Endothelial cell of umbilical vein (primary cell): ENCODE measurements at regions of chr5 and their contacts with region 1.

Region 1: DNA sequence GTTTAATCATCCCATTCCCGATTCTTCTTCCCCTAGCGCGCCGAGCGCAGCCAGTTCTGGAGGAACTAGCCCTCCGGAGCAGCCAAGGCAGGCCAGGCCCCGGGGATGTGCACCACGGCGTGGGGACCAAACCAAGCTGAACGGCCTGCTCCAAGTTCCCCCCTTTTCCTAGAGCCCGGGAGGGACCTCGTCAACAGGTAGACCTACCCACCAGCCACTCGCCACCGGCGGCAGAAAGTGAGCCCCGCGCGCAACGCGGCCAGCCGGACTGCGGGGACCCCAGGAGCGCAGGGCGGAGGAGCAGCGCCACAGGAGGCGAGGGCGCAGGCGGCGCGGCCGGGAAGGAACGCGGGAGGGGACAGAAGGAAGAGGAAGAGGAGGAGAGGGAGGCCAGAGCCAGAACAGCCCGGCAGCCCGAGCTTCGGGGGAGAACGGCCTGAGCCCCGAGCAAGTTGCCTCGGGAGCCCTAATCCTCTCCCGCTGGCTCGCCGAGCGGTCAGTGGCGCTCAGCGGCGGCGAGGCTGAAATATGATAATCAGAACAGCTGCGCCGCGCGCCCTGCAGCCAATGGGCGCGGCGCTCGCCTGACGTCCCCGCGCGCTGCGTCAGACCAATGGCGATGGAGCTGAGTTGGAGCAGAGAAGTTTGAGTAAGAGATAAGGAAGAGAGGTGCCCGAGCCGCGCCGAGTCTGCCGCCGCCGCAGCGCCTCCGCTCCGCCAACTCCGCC is at the start of gene ISL1:
- DNase-seq: peak; percentile 90
- H3K4me3 ChIP-seq: peak within 1 kb of the TSS; percentile 46 to 69 (median 55)
- H3K27ac ChIP-seq: peak within 1 kb of the TSS; percentile 40
- H3K4me1 ChIP-seq: peaks cover 18% of the 10 kb centered on the region
- H3K27me3 ChIP-seq: peaks cover 47 to 86% of the 10 kb centered on the region in 2 experiments
- CTCF ChIP-seq: no peak
- POLR2A ChIP-seq: peak; percentile 55
- total RNA-seq, gene ISL1: 0.53 and 1.1 TPM in 2 replicates

Region 2: DNA sequence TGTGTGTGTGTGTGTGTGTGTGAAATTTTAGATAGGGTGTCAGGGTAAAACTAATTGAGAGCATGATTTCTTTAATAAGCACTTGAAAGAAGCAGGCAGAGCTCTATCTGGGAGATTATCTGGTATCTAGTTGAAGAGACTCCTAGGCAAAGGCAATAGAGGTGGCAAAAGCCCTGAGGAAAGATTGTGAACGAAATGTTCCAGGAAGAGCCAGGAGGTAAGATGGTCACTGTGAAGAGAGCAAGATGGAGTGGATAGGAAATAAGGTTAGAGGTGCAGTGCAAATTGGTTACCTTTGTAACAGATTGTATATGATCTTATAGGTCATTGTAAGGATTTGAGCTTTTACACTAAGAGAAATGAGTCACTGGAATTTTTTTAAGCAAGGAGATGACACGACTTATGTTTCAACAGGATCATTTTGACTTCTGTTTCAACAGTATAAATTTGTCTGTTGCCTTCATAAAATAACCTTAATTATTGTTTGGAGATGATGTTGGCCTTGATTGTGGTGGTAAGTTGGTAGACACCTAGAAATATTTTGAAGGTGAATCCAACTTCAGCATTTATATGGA is 476.8 kb before region 1 on chr5:
- CTCF ChIA-PET with region 1: no interaction called
- POLR2A ChIA-PET with region 1: no interaction called
- dilution Hi-C with region 1: no loop called
- intact Hi-C with region 1: no loop called
- DNase-seq: no peak
- H3K4me3 ChIP-seq: no peak overlapping the region
- H3K27ac ChIP-seq: no peak overlapping the region
- H3K4me1 ChIP-seq: no peaks in the 10 kb centered on the region
- H3K27me3 ChIP-seq: no peaks in the 10 kb centered on the region
- CTCF ChIP-seq: no peak
- POLR2A ChIP-seq: no peak

Region 3: DNA sequence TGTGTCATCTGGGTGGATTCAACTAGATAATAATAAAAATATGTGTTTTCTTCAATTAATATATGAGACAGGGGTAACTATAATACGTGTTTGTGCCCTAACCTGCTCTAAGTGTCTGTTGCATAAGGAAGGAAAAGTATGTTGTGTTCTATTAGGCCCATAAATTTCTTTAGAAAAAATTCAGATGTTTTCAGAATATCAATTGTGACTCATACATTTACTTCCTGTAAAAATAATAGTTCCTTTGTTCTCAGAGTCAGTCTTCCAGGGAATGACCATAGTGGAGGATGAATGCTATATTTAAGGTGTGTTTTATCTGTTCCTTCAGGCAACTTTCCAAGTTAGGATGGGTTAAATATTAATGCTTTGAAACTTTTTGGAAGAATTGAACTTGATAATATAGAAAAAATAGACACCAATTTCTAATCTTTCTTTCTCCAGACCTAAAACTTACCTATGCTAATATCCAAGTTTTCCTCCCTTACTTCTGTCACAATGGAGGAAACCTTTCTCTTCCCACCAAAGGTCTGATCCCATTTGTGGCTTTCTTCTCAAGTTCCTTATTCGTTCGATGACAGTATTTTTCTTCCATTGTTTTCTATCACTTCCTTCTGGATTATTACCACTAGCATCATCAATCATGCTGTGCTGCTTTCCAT is 50.3 kb after region 1 on chr5:
- CTCF ChIA-PET with region 1: no interaction called
- POLR2A ChIA-PET with region 1: no interaction called
- dilution Hi-C with region 1: no loop called
- intact Hi-C with region 1: loop called (anchors 1 kb)
- DNase-seq: peak; percentile 37
- H3K4me3 ChIP-seq: no peak overlapping the region
- H3K27ac ChIP-seq: no peak overlapping the region
- H3K4me1 ChIP-seq: no peaks in the 10 kb centered on the region
- H3K27me3 ChIP-seq: no peaks in the 10 kb centered on the region
- CTCF ChIP-seq: no peak
- POLR2A ChIP-seq: no peak

Region 4: DNA sequence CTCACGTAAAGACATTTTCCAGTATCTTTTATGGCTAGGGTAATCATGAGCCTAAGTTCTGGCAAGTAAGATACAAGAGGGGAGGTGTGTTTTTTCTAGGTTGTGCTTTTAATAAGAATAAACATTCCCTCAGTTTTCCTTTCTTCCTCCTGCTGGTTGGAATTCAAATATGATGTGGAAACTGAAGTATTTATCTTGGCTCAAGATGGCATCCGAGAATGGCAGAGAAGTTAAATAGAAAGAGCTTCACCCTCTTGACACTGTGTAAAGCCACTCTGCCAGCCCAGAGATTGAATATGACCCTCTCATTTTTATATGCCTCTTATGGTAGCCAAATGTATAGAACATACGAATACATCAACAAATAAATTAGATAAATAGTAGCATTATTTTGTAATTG is 438.8 kb after region 1 on chr5:
- CTCF ChIA-PET with region 1: no interaction called
- POLR2A ChIA-PET with region 1: no interaction called
- dilution Hi-C with region 1: no loop called
- intact Hi-C with region 1: loop called (anchors 5 kb)
- DNase-seq: peak; percentile 88
- H3K4me3 ChIP-seq: no peak overlapping the region
- H3K27ac ChIP-seq: no peak overlapping the region
- H3K4me1 ChIP-seq: no peaks in the 10 kb centered on the region
- H3K27me3 ChIP-seq: no peaks in the 10 kb centered on the region
- CTCF ChIP-seq: peak in 1 of 2 donors; percentile 18
- POLR2A ChIP-seq: no peak

Region 5: GRCh38 chr5:51960617-51961115 is 577.7 kb after region 1 on chr5:
- CTCF ChIA-PET with region 1: interaction called, 4 read pairs
- POLR2A ChIA-PET with region 1: no interaction called
- dilution Hi-C with region 1: no loop called
- intact Hi-C with region 1: loop called (anchors 2 kb)
- DNase-seq: peak; percentile 14
- H3K4me3 ChIP-seq: no peak overlapping the region
- H3K27ac ChIP-seq: no peak overlapping the region
- H3K4me1 ChIP-seq: no peaks in the 10 kb centered on the region
- H3K27me3 ChIP-seq: no peaks in the 10 kb centered on the region
- CTCF ChIP-seq: peak in 1 of 2 donors; percentile 31
- POLR2A ChIP-seq: no peak

Region 6: DNA sequence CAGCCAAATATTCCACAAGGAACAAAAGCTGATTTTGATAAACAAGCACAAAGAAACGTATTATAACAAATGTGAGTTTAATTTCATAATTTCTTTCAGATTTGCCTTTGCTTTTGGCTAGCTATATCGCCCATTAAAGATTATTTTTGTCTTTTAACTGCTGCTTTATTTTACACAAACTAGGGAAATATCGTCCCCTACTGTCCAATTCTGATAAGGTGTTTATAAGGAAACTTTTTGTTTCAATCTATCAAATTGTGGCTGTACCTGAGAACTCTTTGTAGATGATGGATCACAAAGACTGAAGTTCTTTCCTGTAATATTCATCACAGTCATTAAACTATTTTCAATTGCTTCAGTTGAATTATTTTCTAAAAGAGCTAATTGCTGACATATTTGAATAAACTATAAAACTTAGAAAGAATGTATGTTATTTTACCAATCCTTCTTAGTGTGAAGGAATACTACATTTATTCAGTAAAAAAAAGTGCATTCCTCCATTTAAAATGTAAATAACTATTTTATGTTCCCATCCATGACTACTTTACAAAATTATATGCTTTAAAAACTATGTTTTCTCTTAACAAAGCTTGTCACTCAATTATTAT is 973.5 kb after region 1 on chr5:
- CTCF ChIA-PET with region 1: interaction called, 5 read pairs
- POLR2A ChIA-PET with region 1: no interaction called
- dilution Hi-C with region 1: no loop called
- intact Hi-C with region 1: loop called (anchors 1 kb)
- DNase-seq: peak; percentile 30
- H3K4me3 ChIP-seq: no peak overlapping the region
- H3K27ac ChIP-seq: no peak overlapping the region
- H3K4me1 ChIP-seq: no peaks in the 10 kb centered on the region
- H3K27me3 ChIP-seq: no peaks in the 10 kb centered on the region
- CTCF ChIP-seq: peak; percentile 34 to 45
- POLR2A ChIP-seq: no peak